Tibial artery (tissue), 4 donors: ENCODE measurements at regions of chr11 and their contacts with region 1.

Region 1: GRCh38 chr11:1271002-1271401 is 38.4 kb downstream of the TOLLIP start:
- DNase-seq: no peak
- H3K4me3 ChIP-seq: no peak overlapping the region
- H3K27ac ChIP-seq: no peak overlapping the region
- H3K4me1 ChIP-seq: no peaks in the 10 kb centered on the region
- H3K27me3 ChIP-seq: no peaks in the 10 kb centered on the region
- CTCF ChIP-seq: no peak

Region 2: GRCh38 chr11:1521382-1522080 is 250.5 kb after region 1 on chr11:
- intact Hi-C with region 1: loop called (anchors 10 kb)
- DNase-seq: no peak
- H3K4me3 ChIP-seq: no peak overlapping the region
- H3K27ac ChIP-seq: no peak overlapping the region
- H3K4me1 ChIP-seq: peaks cover 0 to 40% (median 19%) of the 10 kb centered on the region in 4 donors
- H3K27me3 ChIP-seq: no peaks in the 10 kb centered on the region
- CTCF ChIP-seq: no peak